ENCODE measurements at regions of chr1 and their contacts with region 1.

Region 1: GRCh38 chr1:85330711-85331290 is 54.4 kb upstream of the BCL10 start:
- DNase-seq: peak; percentile 99
- H3K4me3 ChIP-seq: no peak overlapping the region
- H3K27me3 ChIP-seq: no peaks in the 10 kb centered on the region
- CTCF ChIP-seq: no peak; the same call in 1 of the 2 replicates

Region 2: GRCh38 chr1:85344256-85344694 is 13.5 kb after region 1 on chr1:
- CTCF ChIA-PET with region 1: interaction called, 15 read pairs
- POLR2A ChIA-PET with region 1: interaction called, 3 read pairs
- DNase-seq: no peak
- H3K4me3 ChIP-seq: no peak overlapping the region
- H3K27me3 ChIP-seq: no peaks in the 10 kb centered on the region
- CTCF ChIP-seq: peak; percentile 80

Measured in BJ (cell line).